Panc1 (cell line): ENCODE measurements at regions of chr3 and their contacts with region 1.

Region 1: DNA sequence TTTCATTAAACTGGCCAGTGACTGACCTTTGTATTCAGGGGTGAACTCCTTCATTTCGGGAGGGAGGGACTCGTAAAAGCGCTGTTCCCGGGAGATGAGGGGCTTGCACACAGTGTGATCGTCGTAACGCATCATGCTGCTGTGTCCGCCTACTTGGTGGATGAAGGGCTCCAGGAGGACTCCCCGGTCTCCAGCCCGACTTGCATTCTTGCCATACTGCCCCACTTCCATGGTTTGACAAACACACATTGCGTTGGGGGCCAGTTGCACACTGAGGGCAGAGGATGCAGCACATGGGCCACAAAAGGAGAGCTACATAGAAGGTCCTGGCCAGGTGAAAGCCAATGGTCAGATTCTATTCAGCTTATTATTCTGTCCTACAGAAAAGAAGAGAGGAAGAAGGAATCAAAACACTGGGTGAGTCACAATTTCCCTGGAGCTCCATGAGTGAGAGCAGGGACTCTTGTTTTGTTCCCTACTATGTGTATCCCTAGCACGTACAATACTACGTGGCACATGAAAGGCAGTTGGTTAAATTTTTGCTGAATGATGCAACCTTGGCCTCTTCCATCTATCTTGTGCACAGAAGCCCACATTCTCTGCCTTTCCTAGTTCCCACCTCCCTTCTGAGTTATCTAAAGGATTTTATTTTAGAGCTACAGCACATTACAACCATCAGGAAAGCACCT is 24.2 kb upstream of the GMPPB start:
- DNase-seq: no peak
- ATAC-seq: no peak
- H3K4me3 ChIP-seq: no peak overlapping the region
- H3K27ac ChIP-seq: no peak overlapping the region
- H3K4me1 ChIP-seq: peaks cover 3% of the 10 kb centered on the region; the same call in 1 of the 2 replicates
- H3K27me3 ChIP-seq: no peaks in the 10 kb centered on the region
- CTCF ChIP-seq: no peak

Region 2: GRCh38 chr3:49734752-49735151 is 13.2 kb before region 1 on chr3:
- CTCF ChIA-PET with region 1: no interaction called
- POLR2A ChIA-PET with region 1: interaction called, 15 read pairs
- in situ Hi-C with region 1: no loop called
- intact Hi-C with region 1: no loop called
- DNase-seq: no peak
- ATAC-seq: no peak
- H3K4me3 ChIP-seq: no peak overlapping the region
- H3K27ac ChIP-seq: no peak overlapping the region
- H3K4me1 ChIP-seq: no peaks in the 10 kb centered on the region
- H3K27me3 ChIP-seq: no peaks in the 10 kb centered on the region
- CTCF ChIP-seq: no peak